ENCODE measurements at regions of chr12 and their contacts with region 1.

Region 1: DNA sequence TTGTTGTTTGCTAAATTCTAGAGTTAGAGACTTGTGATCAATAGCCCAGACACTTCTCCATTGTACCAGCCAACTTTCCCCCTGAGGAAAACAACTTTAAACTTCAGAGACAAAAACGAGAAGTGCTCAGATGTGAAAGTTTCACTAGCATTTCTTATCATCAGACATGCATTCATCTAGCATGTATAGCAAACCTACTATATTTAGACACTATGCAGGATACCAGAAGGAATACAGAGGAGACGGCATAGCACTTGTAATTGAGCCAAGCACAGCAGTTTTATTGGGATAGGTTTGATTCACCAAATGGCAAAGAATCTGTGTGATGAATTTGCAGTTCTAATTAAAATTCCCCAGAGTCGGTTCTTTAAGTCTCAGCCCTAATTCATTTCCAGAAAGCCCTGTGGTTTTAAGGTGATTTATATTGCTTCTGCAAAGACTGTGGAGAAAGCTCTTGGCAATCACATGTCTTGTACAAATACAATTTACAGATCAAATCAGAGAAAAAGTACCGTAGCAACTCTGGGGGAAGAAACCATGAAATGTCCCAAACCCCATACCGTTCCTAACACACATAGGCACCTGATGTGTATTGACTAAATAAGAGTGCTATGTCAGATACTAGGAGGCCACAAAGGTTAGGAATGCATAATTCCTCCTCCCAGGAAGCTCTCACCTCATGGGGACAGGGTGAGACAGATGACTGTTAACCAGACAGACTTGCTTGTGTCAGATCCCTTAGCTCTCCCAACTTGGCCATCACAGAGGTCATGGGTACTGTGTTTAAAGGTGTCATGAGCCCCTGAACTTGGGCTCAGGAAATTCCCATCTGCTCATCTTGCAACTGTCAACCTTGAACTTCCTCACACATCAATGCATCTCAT is 69.6 kb upstream of the KRAS start:
- DNase-seq: peak; percentile 13
- ATAC-seq: peak; percentile 76
- H3K4me3 Mint-ChIP-seq: peak overlapping the region; percentile 27
- H3K27ac Mint-ChIP-seq: peak overlapping the region; percentile 21
- H3K4me1 Mint-ChIP-seq: peaks cover 55% of the 10 kb centered on the region
- H3K27me3 Mint-ChIP-seq: peaks cover 1% of the 10 kb centered on the region

Region 2: DNA sequence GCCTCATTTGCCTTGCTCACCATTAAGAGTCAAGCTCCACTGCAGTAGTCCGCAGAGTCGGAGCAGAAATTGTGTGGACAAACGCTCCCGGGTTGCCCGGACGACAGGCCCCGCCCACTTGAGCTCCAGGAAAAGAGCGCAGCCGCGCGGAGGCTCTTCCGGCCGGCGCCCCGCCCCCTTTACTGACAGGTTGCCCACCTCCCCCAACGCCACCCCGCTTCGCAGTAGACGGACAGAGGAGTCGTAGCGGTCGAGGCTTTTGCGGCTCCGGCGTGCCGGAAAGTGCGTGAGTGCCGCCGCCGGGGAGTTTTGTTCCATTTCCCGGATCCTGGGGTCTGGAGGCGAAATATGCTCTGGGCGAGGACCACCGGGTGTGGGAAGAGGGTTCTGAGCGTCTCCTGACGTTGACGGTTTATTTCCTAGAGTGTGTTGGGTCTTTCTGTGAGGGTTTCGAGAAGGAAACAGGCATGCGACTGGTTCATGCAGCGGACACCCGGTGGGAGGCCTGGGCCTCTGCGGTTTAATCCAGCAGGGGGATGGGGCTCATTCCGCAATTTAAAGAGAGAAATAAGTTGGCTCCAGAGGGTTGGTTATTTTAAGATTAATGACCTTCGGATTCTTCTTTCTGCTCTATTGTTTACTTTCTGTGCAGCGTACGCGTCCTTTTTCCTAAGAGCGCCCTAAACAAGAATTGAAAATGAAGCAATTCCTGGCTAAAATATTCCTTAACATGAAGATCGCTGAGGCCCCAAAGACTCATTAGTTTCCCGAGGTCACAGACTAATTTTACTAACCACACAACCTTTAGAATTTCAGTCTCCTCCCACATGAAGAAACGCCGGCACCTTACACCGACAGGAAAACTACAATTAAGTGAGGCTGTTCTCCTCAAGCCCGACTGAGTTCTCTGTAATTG is 125.1 kb before region 1 on chr12 and contains the starts of genes DNAI7 and ETFRF1:
- CTCF ChIA-PET with region 1: no interaction called
- POLR2A ChIA-PET with region 1: no interaction called
- intact Hi-C with region 1: loop called in 1 of 2 experiments (anchors 2 kb)
- DNase-seq: peak; percentile 97
- ATAC-seq: peak; percentile 98
- H3K4me3 Mint-ChIP-seq: peak within 1 kb of the TSS; percentile 91
- H3K27ac Mint-ChIP-seq: peak within 1 kb of the TSS; percentile 96
- H3K4me1 Mint-ChIP-seq: peaks cover 29% of the 10 kb centered on the region
- H3K27me3 Mint-ChIP-seq: no peaks in the 10 kb centered on the region
- total RNA-seq, gene DNAI7: not detected
- total RNA-seq, gene ETFRF1: 11.7 to 15.4 TPM

Region 3: DNA sequence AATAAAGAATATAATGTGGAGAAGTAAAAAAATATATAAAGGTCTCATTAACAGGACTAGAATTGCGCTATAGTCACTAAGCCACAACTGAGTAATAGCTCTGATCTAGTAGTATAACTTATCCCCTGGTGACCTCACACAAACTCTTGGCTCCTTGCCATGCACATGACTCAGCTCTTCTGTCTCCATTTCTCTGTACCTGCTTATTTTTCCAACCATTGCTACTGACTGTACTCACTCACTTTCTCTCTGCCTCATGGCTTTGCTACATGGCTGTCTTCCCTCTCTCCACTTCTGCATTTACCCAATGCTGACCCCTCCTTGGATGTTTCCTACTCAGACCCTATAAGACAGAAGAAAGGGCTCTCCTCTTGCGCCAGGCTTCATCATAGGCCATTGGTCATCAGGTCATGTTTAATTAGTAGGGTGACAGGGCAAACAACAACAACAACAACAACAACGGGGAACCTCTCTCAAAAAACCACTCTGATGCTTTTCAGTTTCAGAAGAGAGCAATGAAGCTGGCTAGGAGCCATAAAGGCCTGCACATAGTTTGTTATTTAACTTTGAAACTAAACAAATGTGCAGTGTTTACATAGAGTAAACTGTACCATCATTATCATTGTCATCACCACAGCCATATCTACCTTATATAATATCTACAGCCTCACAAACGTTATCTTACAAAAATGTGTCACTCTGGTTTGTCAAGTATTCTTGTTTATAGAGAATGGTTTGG is 44.0 kb before region 1 on chr12:
- CTCF ChIA-PET with region 1: no interaction called
- POLR2A ChIA-PET with region 1: no interaction called
- intact Hi-C with region 1: loop called (anchors 1 to 5 kb)
- DNase-seq: peak; percentile 90
- ATAC-seq: peak; percentile 97
- H3K4me3 Mint-ChIP-seq: peak overlapping the region; percentile 7
- H3K27ac Mint-ChIP-seq: peak overlapping the region; percentile 40
- H3K4me1 Mint-ChIP-seq: peaks cover 31% of the 10 kb centered on the region
- H3K27me3 Mint-ChIP-seq: no peaks in the 10 kb centered on the region

Region 4: GRCh38 chr12:25364529-25365339 is 44.4 kb after region 1 on chr12:
- CTCF ChIA-PET with region 1: interaction called, 3 read pairs
- POLR2A ChIA-PET with region 1: no interaction called
- intact Hi-C with region 1: loop called (anchors 1 kb)
- DNase-seq: peak; percentile 82
- ATAC-seq: peak; percentile 90
- H3K4me3 Mint-ChIP-seq: peak overlapping the region; percentile 31
- H3K27ac Mint-ChIP-seq: no peak overlapping the region
- H3K4me1 Mint-ChIP-seq: peaks cover 16% of the 10 kb centered on the region
- H3K27me3 Mint-ChIP-seq: peaks cover 15% of the 10 kb centered on the region

Measured in activated CD4-positive, alpha-beta T cell treated with anti-CD3 and anti-CD28 coated beads for 36 hours (primary cell).